Heart left ventricle (tissue), 16 donors: ENCODE measurements at regions of chr5 and their contacts with region 1.

Region 1: GRCh38 chr5:139633295-139634027 is 14.7 kb upstream of the CXXC5 start:
- DNase-seq: peak in 3 of 5 donors; percentile 70 to 81 (median 71)
- ATAC-seq: peak; percentile 9 to 30 (median 28)
- H3K4me3 ChIP-seq: no peak overlapping the region
- H3K27ac ChIP-seq: no peak overlapping the region
- H3K4me1 ChIP-seq: peaks cover 12 to 39% (median 28%) of the 10 kb centered on the region in 12 donors
- H3K27me3 ChIP-seq: no peaks in the 10 kb centered on the region
- CTCF ChIP-seq: peak; percentile 92 to 98 (median 97)
- POLR2A ChIP-seq: no peak

Region 2: GRCh38 chr5:139246394-139246793 is 387.1 kb before region 1 on chr5:
- intact Hi-C with region 1: no loop called
- DNase-seq: no peak
- ATAC-seq: peak in 1 of 4 donors; percentile 54
- H3K4me3 ChIP-seq: no peak overlapping the region
- H3K27ac ChIP-seq: no peak overlapping the region
- H3K4me1 ChIP-seq: peaks cover 0 to 18% (median 0%) of the 10 kb centered on the region in 12 donors
- H3K27me3 ChIP-seq: no peaks in the 10 kb centered on the region
- CTCF ChIP-seq: no peak
- POLR2A ChIP-seq: no peak

Region 3: DNA sequence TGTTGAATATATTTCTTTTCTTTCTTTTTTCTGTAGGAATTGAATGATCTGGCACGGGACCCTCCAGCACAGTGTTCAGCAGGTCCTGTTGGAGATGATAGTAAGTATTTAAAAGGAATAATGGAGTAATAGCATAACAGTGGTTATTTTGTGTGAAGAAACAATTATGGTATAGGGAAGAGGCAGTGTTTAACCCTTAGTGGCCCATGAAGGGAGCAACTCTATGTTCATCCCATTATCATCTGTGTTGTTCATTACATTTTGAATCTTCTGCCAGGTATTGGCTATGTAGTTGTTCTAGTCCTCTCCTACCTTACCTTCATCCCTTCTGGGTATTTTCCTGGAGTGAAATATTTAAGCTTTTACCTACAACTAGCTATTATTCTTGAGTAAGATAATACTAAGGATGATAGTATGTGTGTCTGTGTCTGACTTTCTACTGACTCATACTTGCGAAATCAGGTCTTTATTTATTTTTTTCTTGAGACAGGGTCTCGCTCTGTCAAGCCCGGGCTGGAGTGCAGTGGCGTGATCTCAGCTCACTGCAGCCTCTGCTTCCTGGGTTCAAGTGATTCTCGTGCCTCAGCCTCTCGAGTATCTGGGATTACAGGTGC is 33.0 kb before region 1 on chr5:
- intact Hi-C with region 1: no loop called
- DNase-seq: no peak
- ATAC-seq: peak in 1 of 4 donors; percentile 13
- H3K4me3 ChIP-seq: no peak overlapping the region
- H3K27ac ChIP-seq: peak overlapping the region in 2 of 12 donors; percentile 49 to 53
- H3K4me1 ChIP-seq: peaks cover 0 to 14% (median 5%) of the 10 kb centered on the region in 12 donors
- H3K27me3 ChIP-seq: no peaks in the 10 kb centered on the region
- CTCF ChIP-seq: no peak
- POLR2A ChIP-seq: no peak

Region 4: DNA sequence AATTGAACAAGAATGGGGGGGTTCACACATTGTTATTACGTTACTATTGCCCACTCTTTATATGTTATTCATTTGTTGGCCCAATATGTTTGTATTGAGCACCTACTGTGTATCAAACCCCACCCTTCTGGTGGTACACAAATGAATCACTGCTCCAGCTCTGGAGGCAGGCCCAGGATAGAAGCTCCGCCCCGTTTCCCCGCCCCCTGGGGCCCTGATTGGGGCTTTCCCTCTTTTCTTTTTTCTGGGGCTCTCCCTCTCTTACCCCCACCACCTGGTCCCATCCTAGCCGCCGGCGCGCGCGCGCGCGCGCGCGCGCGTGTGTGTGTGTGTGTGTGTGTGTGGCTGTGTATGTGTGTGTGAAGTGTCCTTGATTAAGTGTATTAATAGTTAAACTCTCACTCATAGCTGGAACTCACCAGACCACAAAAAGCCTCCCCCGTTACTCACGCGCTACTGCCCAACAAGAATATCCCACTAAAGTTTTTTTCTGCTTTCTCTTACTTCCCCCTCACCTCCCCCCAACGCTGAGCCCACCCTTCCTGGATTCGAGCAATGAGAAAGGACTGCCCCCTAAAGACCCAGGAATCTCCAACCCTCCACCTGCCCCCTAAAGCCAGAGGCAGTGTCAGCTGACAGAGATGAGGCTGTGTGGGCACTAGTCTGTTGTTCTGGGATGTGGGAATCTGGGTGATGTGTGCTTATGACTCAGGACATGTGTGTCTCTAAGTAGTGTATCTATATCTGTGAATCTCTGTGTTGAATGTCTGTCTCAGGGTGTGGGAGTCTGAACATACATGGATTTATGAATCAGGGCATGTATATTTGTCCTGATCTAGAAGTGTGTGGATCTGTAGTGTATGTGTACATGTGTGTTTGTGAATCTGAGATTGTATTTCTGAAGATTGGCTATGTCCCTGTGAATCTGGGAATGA is 18.7 kb after region 1 on chr5:
- intact Hi-C with region 1: loop called in 4 of 10 experiments (anchors 1 to 2 kb)
- DNase-seq: peak; percentile 76 to 82 (median 80)
- ATAC-seq: peak; percentile 1 to 42 (median 21)
- H3K4me3 ChIP-seq: peak overlapping the region in 9 of 12 donors; percentile 11 to 98 (median 66)
- H3K27ac ChIP-seq: peak overlapping the region; percentile 82 to 98 (median 92)
- H3K4me1 ChIP-seq: peaks cover 18 to 91% (median 74%) of the 10 kb centered on the region in 12 donors
- H3K27me3 ChIP-seq: peaks cover 0 to 9% (median 0%) of the 10 kb centered on the region in 9 donors
- CTCF ChIP-seq: no peak
- POLR2A ChIP-seq: peak in 1 of 2 donors; percentile 13

Region 5: GRCh38 chr5:139684881-139685749 is 51.7 kb after region 1 on chr5:
- intact Hi-C with region 1: loop called (anchors 1 to 5 kb)
- DNase-seq: peak in 3 of 5 donors; percentile 49 to 77 (median 71)
- ATAC-seq: peak; percentile 61 to 80 (median 62)
- H3K4me3 ChIP-seq: no peak overlapping the region
- H3K27ac ChIP-seq: peak overlapping the region in 11 of 12 donors; percentile 27 to 83 (median 66)
- H3K4me1 ChIP-seq: peaks cover 0 to 68% (median 25%) of the 10 kb centered on the region in 12 donors
- H3K27me3 ChIP-seq: no peaks in the 10 kb centered on the region
- CTCF ChIP-seq: peak in 7 of 12 donors; percentile 2 to 43 (median 16)
- POLR2A ChIP-seq: no peak

Region 6: GRCh38 chr5:139745800-139746690 is 112.6 kb after region 1 on chr5:
- intact Hi-C with region 1: loop called in 1 of 10 experiments (anchors 5 kb)
- DNase-seq: peak; percentile 69 to 72 (median 72)
- ATAC-seq: peak; percentile 53 to 81 (median 73)
- H3K4me3 ChIP-seq: peak overlapping the region; percentile 9 to 58 (median 50)
- H3K27ac ChIP-seq: peak overlapping the region in 3 of 12 donors; percentile 18 to 58 (median 38)
- H3K4me1 ChIP-seq: peaks cover 16 to 36% (median 32%) of the 10 kb centered on the region in 12 donors
- H3K27me3 ChIP-seq: peaks cover 0 to 42% (median 25%) of the 10 kb centered on the region in 9 donors
- CTCF ChIP-seq: no peak
- POLR2A ChIP-seq: no peak

Region 7: DNA sequence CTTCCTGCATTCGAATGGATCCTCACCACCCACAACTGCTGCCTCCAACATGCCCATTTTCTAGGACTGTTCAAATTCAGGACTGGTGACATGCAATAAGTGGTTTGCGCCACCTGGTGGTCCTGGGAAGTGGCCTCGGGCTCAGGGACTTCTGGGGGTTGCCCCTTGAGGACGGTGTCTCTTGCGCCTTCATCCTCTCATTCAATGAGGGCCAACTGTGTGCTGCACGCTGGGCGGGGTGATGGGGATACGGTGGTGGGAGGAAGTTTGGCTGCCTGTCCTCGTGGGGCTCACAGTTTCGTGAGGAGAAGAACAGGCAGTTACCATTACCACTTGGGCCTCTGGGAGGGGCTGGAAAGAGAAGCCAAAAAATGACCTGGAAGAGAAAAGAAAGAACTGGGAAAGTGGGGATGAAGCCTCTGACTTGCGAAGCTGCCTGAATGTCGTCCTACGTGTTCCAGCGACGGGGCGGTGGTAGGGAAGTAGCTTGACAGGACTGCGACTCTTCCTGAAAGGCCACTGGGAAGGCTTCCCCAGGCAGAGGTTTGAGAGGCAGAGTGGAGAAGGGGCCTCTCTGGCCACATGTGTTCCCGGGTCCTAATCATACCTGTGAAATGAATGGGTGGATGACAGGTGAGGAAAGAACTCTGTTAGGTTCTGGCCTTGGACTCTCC is 211.1 kb after region 1 on chr5:
- intact Hi-C with region 1: loop called in 1 of 10 experiments (anchors 10 kb)
- DNase-seq: peak; percentile 56 to 81 (median 70)
- ATAC-seq: peak in 2 of 4 donors; percentile 33 to 45
- H3K4me3 ChIP-seq: no peak overlapping the region
- H3K27ac ChIP-seq: no peak overlapping the region
- H3K4me1 ChIP-seq: peaks cover 0 to 25% (median 9%) of the 10 kb centered on the region in 12 donors
- H3K27me3 ChIP-seq: peaks cover 0 to 9% (median 0%) of the 10 kb centered on the region in 9 donors
- CTCF ChIP-seq: peak; percentile 49 to 78 (median 66)
- POLR2A ChIP-seq: no peak

Region 8: GRCh38 chr5:140157032-140157803 is 523.8 kb after region 1 on chr5:
- intact Hi-C with region 1: loop called in 1 of 10 experiments (anchors 10 kb)
- DNase-seq: peak; percentile 88 to 93 (median 90)
- ATAC-seq: peak; percentile 93 to 96 (median 96)
- H3K4me3 ChIP-seq: peak overlapping the region in 11 of 12 donors; percentile 15 to 57 (median 48)
- H3K27ac ChIP-seq: peak overlapping the region in 11 of 12 donors; percentile 11 to 71 (median 43)
- H3K4me1 ChIP-seq: peaks cover 0 to 19% (median 9%) of the 10 kb centered on the region in 12 donors
- H3K27me3 ChIP-seq: no peaks in the 10 kb centered on the region
- CTCF ChIP-seq: peak; percentile 85 to 93 (median 90)
- POLR2A ChIP-seq: no peak